HEK293T (cell line): ENCODE measurements at regions of chr20 and their contacts with region 1.

Region 1: DNA sequence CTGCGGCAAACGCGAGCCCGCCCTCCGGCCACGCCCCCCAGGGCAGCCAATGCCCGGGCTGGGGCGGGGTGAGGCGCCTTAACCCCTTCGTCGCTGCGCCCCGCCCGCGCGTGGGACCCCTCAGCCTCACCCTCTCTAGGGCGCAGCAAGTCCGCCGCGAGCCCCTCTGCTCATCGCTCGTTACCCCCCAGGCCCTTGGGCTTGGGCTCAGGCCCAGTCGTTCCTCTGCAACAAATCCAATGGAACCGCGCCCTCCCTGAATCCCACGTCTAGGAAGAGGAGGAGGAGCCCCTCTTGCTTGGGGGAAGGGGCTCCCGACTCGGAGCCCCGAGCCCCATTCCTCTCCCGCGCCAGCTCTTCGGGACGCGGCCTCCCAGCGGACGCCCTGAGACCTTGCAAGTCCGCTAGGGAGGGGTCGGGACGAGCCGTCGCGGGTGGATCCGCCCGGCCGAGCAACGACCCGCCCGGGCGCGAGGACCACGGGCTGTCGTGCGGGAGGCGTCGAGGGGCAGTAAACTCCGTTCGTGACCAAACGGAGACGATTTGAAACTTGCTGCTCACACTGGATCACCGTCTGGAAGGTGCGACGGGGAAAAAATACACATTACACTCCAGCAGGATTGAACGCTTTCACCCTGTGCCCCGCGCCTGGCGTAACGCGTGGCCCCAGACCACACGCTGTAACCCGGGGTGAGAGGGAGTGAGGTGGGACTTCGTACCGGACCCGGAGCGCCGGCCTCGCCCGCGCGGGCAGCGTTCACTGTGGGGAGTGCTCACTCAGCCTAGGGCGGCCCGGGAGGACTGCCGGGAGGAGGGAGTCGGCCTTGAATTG is 477 bp upstream of the LZTS3 start:
- DNase-seq: peak; percentile 97

Region 2: GRCh38 chr20:3158968-3159431 is 14.8 kb before region 1 on chr20:
- CTCF ChIA-PET with region 1: interaction called, 3 read pairs
- POLR2A ChIA-PET with region 1: interaction called, 13 read pairs
- DNase-seq: no peak

Region 3: DNA sequence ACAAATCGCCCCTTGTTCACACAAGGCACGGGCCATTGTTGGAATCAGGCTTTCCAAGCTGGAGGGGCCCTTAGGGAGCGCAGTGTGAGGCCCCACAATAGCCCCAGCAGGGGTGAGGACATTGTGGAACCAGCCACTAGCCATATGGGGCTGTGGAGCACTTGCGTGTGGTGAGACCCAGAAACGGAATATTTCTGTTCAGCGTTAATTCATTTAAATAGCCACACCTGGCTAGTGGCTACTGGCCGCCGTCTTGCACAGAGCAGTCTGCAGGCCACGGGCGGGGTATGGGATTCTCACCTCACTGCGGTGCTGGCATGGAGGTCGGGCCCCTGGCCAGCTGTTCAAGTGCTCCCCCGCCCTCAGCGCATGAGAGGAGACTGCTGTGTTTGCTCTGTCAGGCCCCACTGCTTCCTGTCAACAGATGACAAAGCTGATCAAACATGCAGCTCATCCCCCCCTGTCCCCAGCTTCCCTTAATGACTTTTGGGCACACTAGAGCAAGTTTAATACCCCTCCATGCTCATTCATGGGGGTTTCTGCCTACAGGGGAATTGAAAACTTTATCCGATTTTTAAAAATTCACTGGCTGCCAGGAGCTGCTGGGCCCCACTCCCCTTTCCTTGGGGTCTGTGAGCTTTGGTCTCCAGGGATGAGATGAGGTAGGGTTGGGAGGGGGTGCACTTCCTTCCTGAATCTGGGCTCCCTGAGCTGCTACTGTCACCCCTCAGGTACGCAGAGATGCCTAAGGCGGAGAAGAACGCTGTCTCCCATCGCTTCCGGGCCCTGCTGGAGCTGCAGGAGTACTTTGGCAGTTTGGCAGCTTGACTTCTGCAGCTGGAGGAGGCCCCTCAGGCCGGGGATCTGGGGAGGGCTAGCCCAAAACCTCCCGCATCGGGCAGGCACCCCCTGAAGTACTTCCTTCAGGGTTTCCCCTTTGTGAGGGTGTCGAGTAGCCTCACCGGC is 49.1 kb after region 1 on chr20:
- CTCF ChIA-PET with region 1: no interaction called
- POLR2A ChIA-PET with region 1: no interaction called
- DNase-seq: no peak